ENCODE measurements at regions of chr3 and their contacts with region 1.

Region 1: GRCh38 chr3:107999215-107999775 is 91.5 kb downstream of the CD47 start:
- DNase-seq: no peak
- H3K4me3 ChIP-seq: no peak overlapping the region
- H3K4me3 Mint-ChIP-seq: no peak overlapping the region
- H3K27ac Mint-ChIP-seq: no peak overlapping the region
- H3K4me1 ChIP-seq: peaks cover 8% of the 10 kb centered on the region
- H3K4me1 Mint-ChIP-seq: peaks cover 14% of the 10 kb centered on the region
- H3K27me3 ChIP-seq: no peaks in the 10 kb centered on the region
- H3K27me3 Mint-ChIP-seq: peaks cover 2% of the 10 kb centered on the region
- CTCF ChIP-seq: no peak

Region 2: GRCh38 chr3:107367353-107367752 is 631.9 kb before region 1 on chr3:
- CTCF ChIA-PET with region 1: no interaction called
- POLR2A ChIA-PET with region 1: no interaction called
- intact Hi-C with region 1: loop called (anchors 5 kb)
- DNase-seq: no peak
- H3K4me3 ChIP-seq: no peak overlapping the region
- H3K4me3 Mint-ChIP-seq: no peak overlapping the region
- H3K27ac Mint-ChIP-seq: no peak overlapping the region
- H3K4me1 ChIP-seq: no peaks in the 10 kb centered on the region
- H3K4me1 Mint-ChIP-seq: no peaks in the 10 kb centered on the region
- H3K27me3 ChIP-seq: no peaks in the 10 kb centered on the region
- H3K27me3 Mint-ChIP-seq: no peaks in the 10 kb centered on the region
- CTCF ChIP-seq: no peak

Region 3: GRCh38 chr3:108036984-108037741 is 37.9 kb after region 1 on chr3:
- CTCF ChIA-PET with region 1: no interaction called
- POLR2A ChIA-PET with region 1: no interaction called
- intact Hi-C with region 1: no loop called
- DNase-seq: no peak
- H3K4me3 ChIP-seq: no peak overlapping the region
- H3K4me3 Mint-ChIP-seq: no peak overlapping the region
- H3K27ac Mint-ChIP-seq: no peak overlapping the region
- H3K4me1 ChIP-seq: no peaks in the 10 kb centered on the region
- H3K4me1 Mint-ChIP-seq: no peaks in the 10 kb centered on the region
- H3K27me3 ChIP-seq: no peaks in the 10 kb centered on the region
- H3K27me3 Mint-ChIP-seq: no peaks in the 10 kb centered on the region
- CTCF ChIP-seq: no peak

Measured in Caco-2 (cell line).